T-cell (primary cell): ENCODE measurements at regions of chr12 and their contacts with region 1.

Region 1: GRCh38 chr12:83128540-83128939 is 441.8 kb downstream of the TMTC2 start:
- DNase-seq: no peak
- ATAC-seq: no peak
- H3K4me3 ChIP-seq: no peak overlapping the region
- H3K4me3 Mint-ChIP-seq: no peak overlapping the region
- H3K27ac ChIP-seq: no peak overlapping the region
- H3K27ac Mint-ChIP-seq: no peak overlapping the region
- H3K4me1 ChIP-seq: no peaks in the 10 kb centered on the region
- H3K4me1 Mint-ChIP-seq: no peaks in the 10 kb centered on the region
- H3K27me3 ChIP-seq: no peaks in the 10 kb centered on the region
- H3K27me3 Mint-ChIP-seq: no peaks in the 10 kb centered on the region

Region 2: DNA sequence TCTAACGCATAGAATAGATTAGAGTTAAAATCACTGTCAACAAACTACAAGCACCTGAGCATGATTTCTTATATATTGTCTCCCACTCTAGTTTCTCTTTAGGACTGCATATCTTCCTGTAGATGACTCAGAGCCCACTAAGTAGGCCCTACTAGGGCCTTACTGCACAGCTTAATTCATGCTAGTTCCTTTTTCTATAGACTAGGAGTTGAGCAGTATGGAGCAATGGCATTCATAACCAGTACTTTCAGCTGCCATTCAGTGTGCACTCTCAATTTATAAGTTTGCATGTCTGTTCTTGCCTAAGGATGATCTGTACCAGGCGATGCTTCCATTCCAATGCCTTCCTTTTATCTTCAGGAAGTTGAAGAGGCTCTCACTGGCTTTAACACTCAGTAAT is 666.7 kb before region 1 on chr12:
- CTCF ChIA-PET with region 1: interaction called in 1 of 2 experiments, 11 read pairs
- POLR2A ChIA-PET with region 1: no interaction called
- DNase-seq: no peak
- ATAC-seq: no peak
- H3K4me3 ChIP-seq: no peak overlapping the region
- H3K4me3 Mint-ChIP-seq: no peak overlapping the region
- H3K27ac ChIP-seq: no peak overlapping the region
- H3K27ac Mint-ChIP-seq: no peak overlapping the region
- H3K4me1 ChIP-seq: no peaks in the 10 kb centered on the region
- H3K4me1 Mint-ChIP-seq: no peaks in the 10 kb centered on the region
- H3K27me3 ChIP-seq: no peaks in the 10 kb centered on the region
- H3K27me3 Mint-ChIP-seq: no peaks in the 10 kb centered on the region

Region 3: DNA sequence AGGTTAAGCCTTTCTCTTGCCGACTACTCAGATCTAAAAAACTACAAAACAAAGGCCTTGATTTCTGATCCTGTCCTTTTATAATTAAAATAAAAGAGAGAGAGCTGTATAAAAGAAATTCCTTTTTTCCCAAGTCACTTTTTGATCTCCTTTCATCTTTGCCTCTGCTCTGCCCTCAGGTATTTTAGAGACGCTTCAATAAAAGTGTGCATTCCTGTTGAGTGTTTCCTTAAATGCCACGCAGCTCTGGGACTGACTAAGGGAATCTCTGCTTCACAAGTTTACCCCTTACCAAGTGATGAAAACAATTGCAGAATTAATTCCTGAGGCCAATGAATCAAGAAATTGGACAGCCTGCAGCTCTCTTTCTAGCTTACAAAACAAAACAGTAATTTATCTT is 668.0 kb after region 1 on chr12:
- CTCF ChIA-PET with region 1: no interaction called
- POLR2A ChIA-PET with region 1: no interaction called
- DNase-seq: no peak
- ATAC-seq: no peak
- H3K4me3 ChIP-seq: no peak overlapping the region
- H3K4me3 Mint-ChIP-seq: no peak overlapping the region
- H3K27ac ChIP-seq: no peak overlapping the region
- H3K27ac Mint-ChIP-seq: no peak overlapping the region
- H3K4me1 ChIP-seq: no peaks in the 10 kb centered on the region
- H3K4me1 Mint-ChIP-seq: no peaks in the 10 kb centered on the region
- H3K27me3 ChIP-seq: no peaks in the 10 kb centered on the region
- H3K27me3 Mint-ChIP-seq: no peaks in the 10 kb centered on the region